ENCODE measurements at regions of chr2 and their contacts with region 1.

Region 1: GRCh38 chr2:181123798-181124231 is 143.4 kb downstream of the UBE2E3 start:
- DNase-seq: peak; percentile 56
- CTCF ChIP-seq: no peak

Region 2: DNA sequence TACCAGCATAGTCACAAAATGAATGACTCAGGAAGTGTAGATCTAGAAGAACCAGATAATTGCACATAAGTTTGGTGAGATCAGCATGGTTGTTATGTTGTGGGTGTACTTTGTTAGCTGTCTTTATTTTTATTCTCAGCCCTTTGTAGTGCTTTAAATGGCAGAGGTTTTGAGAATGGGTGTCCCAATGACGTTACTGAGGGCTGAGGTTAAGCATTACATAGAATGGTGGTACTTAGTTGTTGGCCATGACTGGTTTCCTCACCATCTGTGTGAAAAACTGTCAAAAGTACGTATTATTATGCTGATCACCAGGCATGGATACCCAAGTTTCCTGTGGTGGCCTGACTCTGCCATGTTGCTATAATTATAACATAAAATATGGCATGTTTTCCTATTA is 22.4 kb after region 1 on chr2:
- CTCF ChIA-PET with region 1: interaction called, 10 read pairs
- POLR2A ChIA-PET with region 1: no interaction called
- DNase-seq: no peak
- CTCF ChIP-seq: no peak

Region 3: GRCh38 chr2:181158427-181158826 is 34.6 kb after region 1 on chr2:
- CTCF ChIA-PET with region 1: no interaction called
- POLR2A ChIA-PET with region 1: no interaction called
- DNase-seq: no peak
- CTCF ChIP-seq: no peak

Measured in GM10248 (cell line).